Colonic mucosa (tissue), 4 donors: ENCODE measurements at regions of chr11 and their contacts with region 1.

Region 1: GRCh38 chr11:73961321-73961720 is 10.5 kb downstream of the DNAJB13 start:
- DNase-seq: no peak
- H3K4me3 ChIP-seq: no peak overlapping the region
- H3K27ac ChIP-seq: no peak overlapping the region
- H3K4me1 ChIP-seq: no peaks in the 10 kb centered on the region
- H3K27me3 ChIP-seq: no peaks in the 10 kb centered on the region
- CTCF ChIP-seq: no peak

Region 2: GRCh38 chr11:74090701-74091100 is 129.4 kb after region 1 on chr11:
- intact Hi-C with region 1: loop called (anchors 5 kb)
- DNase-seq: no peak
- H3K4me3 ChIP-seq: no peak overlapping the region
- H3K27ac ChIP-seq: no peak overlapping the region
- H3K4me1 ChIP-seq: no peaks in the 10 kb centered on the region
- H3K27me3 ChIP-seq: no peaks in the 10 kb centered on the region
- CTCF ChIP-seq: no peak